ENCODE measurements at regions of chr9 and their contacts with region 1.

Region 1: GRCh38 chr9:71604197-71605063 is 163.9 kb downstream of the CEMIP2 start:
- DNase-seq: peak; percentile 63 to 80
- ATAC-seq: peak; percentile 58 to 91 (median 77)
- H3K4me3 ChIP-seq: no peak overlapping the region
- H3K27ac ChIP-seq: no peak overlapping the region
- H3K4me1 ChIP-seq: no peaks in the 10 kb centered on the region
- H3K27me3 ChIP-seq: no peaks in the 10 kb centered on the region
- CTCF ChIP-seq: peak; percentile 56 to 82 (median 76)

Region 2: DNA sequence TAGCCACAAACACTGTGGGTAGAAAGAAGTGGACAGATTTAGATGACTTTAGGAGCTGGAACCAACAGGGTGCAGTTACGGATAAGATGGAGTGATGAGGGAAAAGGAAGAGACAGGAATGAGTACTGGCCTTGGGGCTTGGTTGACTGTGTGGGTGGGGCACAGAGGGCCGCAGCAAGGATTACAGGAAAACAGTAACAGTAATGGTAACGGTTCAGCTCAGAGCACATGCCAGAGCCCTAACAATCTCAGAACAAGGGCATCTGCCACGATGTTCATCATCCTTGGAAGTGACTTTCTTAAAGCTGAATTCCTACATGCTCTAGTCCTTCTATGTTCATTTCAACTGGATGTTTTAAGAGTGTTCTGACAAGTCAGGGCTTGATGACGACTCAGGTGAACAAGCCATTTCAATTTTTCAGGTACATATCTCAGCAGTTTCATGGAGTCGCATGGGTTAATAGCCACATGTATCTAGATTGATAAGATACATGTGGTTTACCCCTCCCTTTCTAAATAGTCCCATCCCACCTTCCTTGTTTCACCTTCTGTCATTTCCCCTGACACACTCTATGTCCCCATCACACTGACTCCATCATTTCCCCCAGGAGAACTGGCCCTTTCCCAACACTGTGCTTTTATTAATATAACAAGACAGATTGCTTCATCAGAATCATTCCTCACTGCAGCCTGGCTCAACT is 98.9 kb after region 1 on chr9:
- intact Hi-C with region 1: loop called in 1 of 10 experiments (anchors 5 kb)
- DNase-seq: no peak
- ATAC-seq: peak in 3 of 8 donors; percentile 36 to 62 (median 57)
- H3K4me3 ChIP-seq: no peak overlapping the region
- H3K27ac ChIP-seq: no peak overlapping the region
- H3K4me1 ChIP-seq: peaks cover 0 to 30% (median 12%) of the 10 kb centered on the region in 9 donors
- H3K27me3 ChIP-seq: no peaks in the 10 kb centered on the region
- CTCF ChIP-seq: no peak

Region 3: GRCh38 chr9:71710856-71711255 is 106.4 kb after region 1 on chr9:
- intact Hi-C with region 1: loop called in 7 of 10 experiments (anchors 2 to 10 kb)
- DNase-seq: no peak
- ATAC-seq: no peak
- H3K4me3 ChIP-seq: no peak overlapping the region
- H3K27ac ChIP-seq: no peak overlapping the region
- H3K4me1 ChIP-seq: peaks cover 0 to 8% (median 0%) of the 10 kb centered on the region in 9 donors
- H3K27me3 ChIP-seq: no peaks in the 10 kb centered on the region
- CTCF ChIP-seq: no peak

Region 4: DNA sequence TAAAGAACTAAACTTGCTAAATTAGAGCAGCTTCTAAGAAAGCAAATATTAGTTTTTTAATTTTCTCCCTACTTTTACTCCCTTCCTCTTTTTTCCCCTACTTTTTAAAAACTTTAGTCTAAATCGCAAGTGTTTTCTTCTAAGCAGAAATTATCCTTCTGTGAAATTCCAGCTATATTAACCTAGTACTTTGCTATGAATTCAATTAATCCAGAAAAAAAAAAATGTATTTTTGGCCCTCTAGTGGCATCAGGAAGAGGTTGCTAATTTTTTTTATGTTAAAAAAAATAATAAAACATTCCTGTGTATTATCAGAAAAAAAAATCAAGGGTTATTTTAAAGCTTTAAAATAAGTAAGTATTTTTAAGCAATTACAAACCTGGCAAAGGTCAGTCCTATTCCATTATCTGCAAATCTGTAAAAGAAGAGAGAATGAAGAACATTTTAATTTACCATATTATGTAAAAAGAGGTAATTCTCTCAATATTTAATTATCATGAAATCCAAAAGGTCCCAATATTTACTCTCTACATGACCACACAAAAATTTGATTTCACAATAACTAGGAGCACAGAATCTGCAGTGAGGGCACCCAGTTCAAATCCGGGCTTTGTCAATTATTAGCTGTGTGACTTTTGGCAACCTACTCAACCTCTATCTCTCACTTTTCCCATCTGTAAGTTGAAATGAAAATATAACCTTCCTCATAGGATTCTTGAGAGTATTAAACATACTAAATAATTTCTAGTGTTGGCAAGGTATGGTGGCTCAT is 111.9 kb after region 1 on chr9:
- intact Hi-C with region 1: loop called in 6 of 10 experiments (anchors 2 to 10 kb)
- DNase-seq: no peak
- ATAC-seq: no peak
- H3K4me3 ChIP-seq: no peak overlapping the region
- H3K27ac ChIP-seq: peak overlapping the region in 1 of 10 donors; percentile 9
- H3K4me1 ChIP-seq: peaks cover 0 to 10% (median 0%) of the 10 kb centered on the region in 9 donors
- H3K27me3 ChIP-seq: no peaks in the 10 kb centered on the region
- CTCF ChIP-seq: peak; percentile 28 to 69 (median 48)

Region 5: DNA sequence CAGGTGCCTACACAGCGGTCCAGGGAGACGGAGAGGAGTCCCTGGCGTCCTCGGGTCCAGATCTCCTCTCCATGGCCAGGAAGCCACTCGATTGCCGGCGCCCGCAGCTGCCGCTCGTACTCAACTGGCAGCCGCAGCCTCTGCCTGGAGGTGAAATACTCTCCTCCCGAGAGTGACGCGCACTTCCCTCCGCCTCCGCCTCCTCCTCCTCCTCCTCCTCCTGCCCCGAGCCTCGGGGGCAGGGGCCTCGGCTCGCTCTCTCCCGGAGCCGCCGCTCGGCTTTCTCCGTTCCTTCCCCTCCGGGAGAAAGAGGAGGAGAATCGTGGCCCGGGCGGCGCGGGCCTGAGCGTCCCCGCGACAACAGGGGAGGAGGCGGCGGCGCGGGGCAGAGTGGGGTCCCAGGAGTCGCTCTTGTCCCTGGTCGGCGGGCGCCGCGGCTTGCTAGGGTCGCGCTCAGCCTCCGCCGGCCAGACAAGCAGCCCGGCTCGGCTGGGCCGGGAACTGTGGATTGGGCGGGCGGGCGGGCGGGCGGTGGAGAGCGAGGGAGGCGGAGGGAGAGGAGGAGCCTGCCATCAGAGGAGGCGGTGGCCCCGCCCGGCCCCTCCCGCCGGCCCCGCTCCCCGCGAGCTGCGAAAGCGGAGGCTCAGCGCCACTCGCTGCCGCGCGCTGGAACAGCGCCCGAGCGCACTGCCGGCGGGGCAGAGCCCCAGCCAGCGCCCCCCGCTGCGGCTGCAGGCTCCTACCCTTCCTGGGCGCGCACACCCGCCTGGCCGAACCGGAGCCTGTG is 164.2 kb after region 1 on chr9 and contains the start of gene CEMIP2:
- intact Hi-C with region 1: loop called in 8 of 10 experiments (anchors 1 to 10 kb)
- DNase-seq: peak; percentile 90 to 91
- ATAC-seq: peak; percentile 89 to 98 (median 92)
- H3K4me3 ChIP-seq: peak within 1 kb of the TSS; percentile 50 to 96 (median 88)
- H3K27ac ChIP-seq: peak within 1 kb of the TSS; percentile 92 to 99 (median 98)
- H3K4me1 ChIP-seq: peaks cover 4 to 53% (median 25%) of the 10 kb centered on the region in 9 donors
- H3K27me3 ChIP-seq: peaks cover 0 to 5% (median 0%) of the 10 kb centered on the region in 7 donors
- CTCF ChIP-seq: peak in 7 of 9 donors; percentile 14 to 67 (median 59)
- total RNA-seq, gene CEMIP2: 4.7 to 34.9 (median 11.0) TPM

Region 6: GRCh38 chr9:72022841-72023240 is 418.4 kb after region 1 on chr9:
- intact Hi-C with region 1: loop called in 1 of 10 experiments (anchors 10 kb)
- DNase-seq: no peak
- ATAC-seq: no peak
- H3K4me3 ChIP-seq: no peak overlapping the region
- H3K27ac ChIP-seq: no peak overlapping the region
- H3K4me1 ChIP-seq: peaks cover 0 to 3% (median 0%) of the 10 kb centered on the region in 9 donors
- H3K27me3 ChIP-seq: no peaks in the 10 kb centered on the region
- CTCF ChIP-seq: no peak

Measured in heart right ventricle (tissue), 16 donors.